ENCODE measurements at regions of chr10 and their contacts with region 1.

Region 1: DNA sequence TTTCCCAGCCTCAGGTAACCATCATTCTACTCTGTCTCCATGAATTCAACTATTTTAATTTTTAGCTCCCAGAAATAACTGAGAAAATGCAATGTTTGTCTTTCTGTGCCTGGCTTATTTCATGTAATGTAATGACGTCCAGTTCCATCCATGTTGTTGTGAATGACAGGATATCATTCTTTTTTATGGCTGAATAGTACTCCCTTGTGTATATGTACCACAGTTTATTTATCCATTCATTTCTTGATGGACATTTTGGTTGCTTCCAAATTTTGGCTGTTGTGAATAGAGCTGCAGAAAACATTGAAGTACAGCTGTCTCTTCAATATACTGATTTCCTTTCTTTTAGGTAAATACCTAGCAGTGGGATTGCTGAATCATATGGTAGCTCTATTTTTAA is 10.5 kb downstream of the ATRNL1 start:
- DNase-seq: no peak
- H3K4me3 ChIP-seq: no peak overlapping the region
- H3K27ac ChIP-seq: no peak overlapping the region
- H3K4me1 ChIP-seq: no peaks in the 10 kb centered on the region
- H3K27me3 ChIP-seq: no peaks in the 10 kb centered on the region
- CTCF ChIP-seq: no peak
- EP300 ChIP-seq: no peak
- POLR2A ChIP-seq: no peak

Region 2: DNA sequence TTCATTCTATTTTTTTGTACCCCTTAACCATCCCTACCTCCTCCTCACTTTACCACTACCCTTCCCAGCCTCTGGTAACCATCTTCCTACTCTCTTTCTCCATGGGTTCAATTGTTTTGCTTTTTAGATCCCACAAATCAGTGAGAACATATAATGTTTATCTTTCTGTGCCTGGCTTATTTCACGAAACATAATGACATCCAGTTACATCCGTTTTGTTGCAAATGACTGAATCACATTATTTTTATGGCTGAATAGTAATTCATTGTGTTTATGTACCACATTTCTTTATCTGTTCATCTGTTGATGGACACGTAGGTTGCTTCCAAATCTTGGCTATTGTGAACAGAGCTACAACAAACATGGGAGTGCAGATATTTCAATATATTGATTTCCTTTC is 13.6 kb after region 1 on chr10:
- intact Hi-C with region 1: loop called in 1 of 4 experiments (anchors 2 kb)
- DNase-seq: no peak
- H3K4me3 ChIP-seq: no peak overlapping the region
- H3K27ac ChIP-seq: no peak overlapping the region
- H3K4me1 ChIP-seq: no peaks in the 10 kb centered on the region
- H3K27me3 ChIP-seq: no peaks in the 10 kb centered on the region
- CTCF ChIP-seq: no peak
- EP300 ChIP-seq: no peak
- POLR2A ChIP-seq: no peak

Region 3: GRCh38 chr10:115355162-115355760 is 251.6 kb after region 1 on chr10:
- intact Hi-C with region 1: no loop called
- DNase-seq: peak in 1 of 5 donors; percentile 22
- H3K4me3 ChIP-seq: no peak overlapping the region
- H3K27ac ChIP-seq: no peak overlapping the region
- H3K4me1 ChIP-seq: no peaks in the 10 kb centered on the region
- H3K27me3 ChIP-seq: no peaks in the 10 kb centered on the region
- CTCF ChIP-seq: peak in 2 of 3 donors; percentile 13 to 27
- EP300 ChIP-seq: no peak
- POLR2A ChIP-seq: no peak

Measured in ovary (tissue), 10 donors.